Heart left ventricle (tissue), 16 donors: ENCODE measurements at regions of chr1 and their contacts with region 1.

Region 1: GRCh38 chr1:56590520-56591011 is 11.2 kb upstream of the PLPP3 start:
- DNase-seq: no peak
- ATAC-seq: no peak
- H3K4me3 ChIP-seq: no peak overlapping the region
- H3K27ac ChIP-seq: no peak overlapping the region
- H3K4me1 ChIP-seq: no peaks in the 10 kb centered on the region
- H3K27me3 ChIP-seq: no peaks in the 10 kb centered on the region
- CTCF ChIP-seq: no peak
- POLR2A ChIP-seq: no peak

Region 2: GRCh38 chr1:56639210-56639609 is 48.6 kb after region 1 on chr1:
- intact Hi-C with region 1: loop called in 1 of 10 experiments (anchors 2 kb)
- DNase-seq: no peak
- ATAC-seq: no peak
- H3K4me3 ChIP-seq: no peak overlapping the region
- H3K27ac ChIP-seq: no peak overlapping the region
- H3K4me1 ChIP-seq: peaks cover 0 to 4% (median under 1%) of the 10 kb centered on the region in 12 donors
- H3K27me3 ChIP-seq: peaks cover 0 to 13% (median 0%) of the 10 kb centered on the region in 9 donors
- CTCF ChIP-seq: no peak
- POLR2A ChIP-seq: no peak

Region 3: DNA sequence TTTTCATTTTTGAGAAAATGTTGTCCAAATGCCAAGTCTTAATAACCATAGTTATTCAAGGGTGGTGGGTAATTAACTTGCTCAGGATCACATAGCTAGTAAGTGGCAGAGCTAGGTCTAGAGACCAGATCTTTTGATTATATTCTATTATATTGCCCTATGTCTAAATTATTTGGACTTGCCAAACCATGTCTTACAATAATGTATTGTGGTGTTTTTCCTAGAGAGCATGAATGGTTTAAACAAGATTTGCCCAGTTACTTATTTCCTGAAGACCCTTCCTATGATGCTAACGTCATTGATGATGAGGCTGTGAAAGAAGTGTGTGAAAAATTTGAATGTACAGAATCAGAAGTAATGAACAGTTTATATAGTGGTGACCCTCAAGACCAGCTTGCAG is 113.2 kb after region 1 on chr1:
- intact Hi-C with region 1: loop called in 2 of 10 experiments (anchors 5 to 10 kb)
- DNase-seq: no peak
- ATAC-seq: no peak
- H3K4me3 ChIP-seq: no peak overlapping the region
- H3K27ac ChIP-seq: no peak overlapping the region
- H3K4me1 ChIP-seq: no peaks in the 10 kb centered on the region
- H3K27me3 ChIP-seq: no peaks in the 10 kb centered on the region
- CTCF ChIP-seq: no peak
- POLR2A ChIP-seq: no peak